Activated CD4-positive, alpha-beta T cell treated with anti-CD3 and anti-CD28 coated beads for 36 hours (primary cell): ENCODE measurements at regions of chr9 and their contacts with region 1.

Region 1: DNA sequence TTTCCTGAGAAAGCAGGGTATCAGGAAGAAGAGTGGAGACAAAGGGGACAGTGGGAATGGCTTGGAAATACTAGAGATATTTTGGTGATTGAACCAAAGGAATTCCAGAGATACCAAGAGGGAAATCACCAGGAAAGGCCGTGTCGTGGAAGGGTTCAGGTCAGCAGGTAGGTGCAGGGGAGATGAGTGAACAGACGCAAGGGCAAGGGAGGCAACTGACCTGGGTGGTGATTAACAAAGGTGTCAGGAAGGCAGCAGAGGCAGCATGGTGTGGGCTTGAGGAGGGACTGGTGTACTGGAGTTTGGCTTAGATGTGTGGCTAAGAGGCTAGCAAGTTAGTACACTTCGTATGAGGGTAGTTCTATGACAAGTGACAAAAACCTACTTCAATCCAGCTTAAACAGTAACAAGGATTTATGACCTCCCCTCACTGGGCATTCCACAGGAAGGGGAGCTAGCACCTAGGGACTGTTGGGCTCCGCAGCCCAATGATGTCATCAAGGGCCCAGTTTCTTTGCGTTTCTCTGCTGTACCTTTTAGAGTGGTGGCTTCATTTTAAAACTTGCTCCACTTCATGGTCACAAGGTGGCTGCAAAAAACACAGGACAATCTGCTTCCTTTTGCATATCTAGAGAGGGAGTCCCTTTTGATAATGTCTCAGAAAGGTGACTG is 37.0 kb downstream of the INIP start:
- DNase-seq: no peak
- ATAC-seq: no peak
- H3K4me3 Mint-ChIP-seq: no peak overlapping the region
- H3K27ac Mint-ChIP-seq: no peak overlapping the region
- H3K4me1 Mint-ChIP-seq: peaks cover 9% of the 10 kb centered on the region
- H3K27me3 Mint-ChIP-seq: peaks cover 2% of the 10 kb centered on the region

Region 2: DNA sequence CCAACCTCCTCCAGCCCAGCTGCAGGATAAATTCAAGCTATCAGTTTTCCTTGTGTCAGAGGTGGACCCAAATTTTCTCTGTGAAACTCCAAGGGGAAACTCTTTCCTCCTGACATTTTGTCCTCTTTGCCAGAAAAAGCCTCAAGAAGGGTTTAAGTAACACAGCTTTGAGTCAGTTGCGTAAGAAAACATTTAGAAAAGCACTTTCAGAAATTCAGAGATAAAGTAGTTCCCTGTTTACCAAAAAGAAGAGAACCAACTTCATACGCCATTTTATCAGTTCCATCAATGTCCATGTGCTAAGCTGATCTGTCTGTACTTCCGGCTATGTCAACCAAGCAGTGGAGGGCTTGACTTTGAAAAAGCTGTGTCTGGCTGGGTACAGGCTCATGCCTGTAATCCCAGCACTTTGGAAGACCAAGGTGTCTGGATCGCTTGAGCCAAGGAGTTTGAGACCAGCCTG is 485.9 kb before region 1 on chr9:
- CTCF ChIA-PET with region 1: no interaction called
- POLR2A ChIA-PET with region 1: no interaction called
- intact Hi-C with region 1: no loop called
- DNase-seq: no peak
- ATAC-seq: no peak
- H3K4me3 Mint-ChIP-seq: no peak overlapping the region
- H3K27ac Mint-ChIP-seq: no peak overlapping the region
- H3K4me1 Mint-ChIP-seq: peaks cover 4% of the 10 kb centered on the region
- H3K27me3 Mint-ChIP-seq: no peaks in the 10 kb centered on the region

Region 3: DNA sequence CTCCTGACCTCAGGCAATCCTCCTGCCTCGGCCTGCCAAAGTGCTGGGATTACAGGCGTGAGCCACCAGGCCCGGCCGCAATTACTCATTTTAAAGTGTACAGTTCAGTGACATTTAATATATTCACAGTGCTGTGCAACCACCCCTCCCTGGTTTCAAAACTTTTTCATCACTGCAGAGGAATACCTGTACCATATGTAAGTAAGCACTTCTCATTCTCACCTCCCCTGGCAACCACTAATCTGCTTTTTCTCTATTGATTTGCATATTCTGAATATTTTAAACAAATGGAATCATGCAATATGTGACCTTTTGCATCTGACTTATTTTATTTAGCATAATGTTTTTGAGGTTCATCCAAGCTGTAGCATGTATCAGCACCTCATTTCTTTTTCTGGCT is 215.5 kb before region 1 on chr9:
- CTCF ChIA-PET with region 1: no interaction called
- POLR2A ChIA-PET with region 1: no interaction called
- intact Hi-C with region 1: loop called in 1 of 2 experiments (anchors 10 kb)
- DNase-seq: no peak
- ATAC-seq: no peak
- H3K4me3 Mint-ChIP-seq: no peak overlapping the region
- H3K27ac Mint-ChIP-seq: no peak overlapping the region
- H3K4me1 Mint-ChIP-seq: peaks cover 2% of the 10 kb centered on the region
- H3K27me3 Mint-ChIP-seq: no peaks in the 10 kb centered on the region

Region 4: DNA sequence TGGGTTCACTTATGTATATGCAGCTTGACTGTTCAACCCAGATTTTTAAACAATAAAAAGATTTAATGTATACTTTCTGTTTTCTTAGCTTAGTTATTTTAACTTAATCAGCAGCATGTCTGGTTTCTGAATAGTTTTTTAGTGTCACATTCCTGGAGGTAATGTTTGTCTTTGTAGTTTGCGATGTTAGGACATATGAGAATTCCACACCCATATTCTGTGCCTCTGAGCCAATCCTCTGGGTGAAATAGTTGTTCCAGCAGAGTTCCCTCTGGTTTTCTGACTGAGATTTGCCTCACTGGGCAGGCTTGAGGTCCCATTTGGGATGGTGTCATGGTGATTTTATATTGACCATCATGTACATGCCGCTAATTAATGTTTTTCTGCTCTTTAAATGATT is 11.5 kb before region 1 on chr9:
- CTCF ChIA-PET with region 1: no interaction called
- POLR2A ChIA-PET with region 1: no interaction called
- intact Hi-C with region 1: no loop called
- DNase-seq: no peak
- ATAC-seq: no peak
- H3K4me3 Mint-ChIP-seq: no peak overlapping the region
- H3K27ac Mint-ChIP-seq: no peak overlapping the region
- H3K4me1 Mint-ChIP-seq: no peaks in the 10 kb centered on the region
- H3K27me3 Mint-ChIP-seq: no peaks in the 10 kb centered on the region